ENCODE measurements at regions of chr17 and their contacts with region 1.

Region 1: DNA sequence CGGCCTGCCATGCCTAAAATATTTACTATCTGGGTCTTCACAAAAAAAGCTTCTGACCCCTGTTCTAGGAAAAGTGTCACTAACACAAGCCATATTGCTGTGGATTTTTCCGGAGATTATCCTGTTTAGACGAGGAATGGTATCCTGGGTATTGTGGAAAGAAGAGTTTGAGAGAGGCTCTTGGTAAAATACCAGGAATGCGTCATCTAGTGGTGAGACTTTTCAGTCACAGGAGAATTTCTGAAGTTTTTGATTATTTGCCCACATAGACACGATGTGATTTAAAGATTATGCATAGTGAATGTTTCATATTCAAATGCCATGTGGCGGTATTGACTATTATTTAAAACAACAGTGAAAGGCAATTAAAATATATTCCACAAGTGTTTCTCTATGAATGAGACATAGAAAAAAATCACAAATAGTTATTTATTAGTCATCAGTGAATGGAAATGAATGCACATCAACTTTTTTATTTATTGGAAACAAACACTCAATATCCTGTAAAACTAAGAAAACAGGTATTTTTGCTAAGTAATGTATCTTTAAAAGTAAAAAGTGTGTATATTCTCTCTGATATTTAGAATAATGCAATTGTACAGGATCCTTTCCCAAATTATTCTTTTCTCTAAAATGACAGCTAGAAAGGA is 7.8 kb downstream of the KRT28 start:
- DNase-seq: no peak
- H3K4me3 ChIP-seq: no peak overlapping the region
- H3K27ac ChIP-seq: no peak overlapping the region
- H3K4me1 ChIP-seq: peaks cover 0 to 7% (median 0%) of the 10 kb centered on the region in 6 donors
- H3K27me3 ChIP-seq: peaks cover 0 to 28% (median 5%) of the 10 kb centered on the region in 7 donors
- CTCF ChIP-seq: peak in 7 of 11 experiments; percentile 13 to 50 (median 29)
- POLR2A ChIP-seq: no peak

Region 2: DNA sequence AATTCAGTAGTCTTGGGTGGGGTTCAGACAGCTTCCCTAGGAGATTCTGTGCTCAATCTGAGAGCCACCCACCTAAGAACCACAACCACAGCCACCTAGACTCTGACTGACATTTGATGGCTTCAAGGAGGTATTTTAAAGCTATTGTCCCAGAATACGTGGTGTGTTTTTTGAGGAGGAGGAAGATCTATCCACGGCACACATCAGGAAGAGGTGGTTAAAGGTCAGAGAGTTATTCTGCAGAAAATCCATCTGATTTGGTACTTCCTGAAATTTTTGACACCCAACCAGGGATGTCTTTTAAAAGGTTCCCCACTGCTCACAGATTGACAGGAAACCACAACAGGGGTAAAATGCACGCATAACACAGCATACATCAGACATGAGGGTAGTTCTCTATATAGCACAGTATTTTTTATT is 169.4 kb before region 1 on chr17:
- intact Hi-C with region 1: loop called (anchors 5 kb)
- DNase-seq: no peak
- H3K4me3 ChIP-seq: no peak overlapping the region
- H3K27ac ChIP-seq: peak overlapping the region in 3 of 8 donors; percentile 0 to 59 (median 51)
- H3K4me1 ChIP-seq: peaks cover 23 to 69% (median 31%) of the 10 kb centered on the region in 6 donors
- H3K27me3 ChIP-seq: no peaks in the 10 kb centered on the region
- CTCF ChIP-seq: no peak
- POLR2A ChIP-seq: no peak

Region 3: GRCh38 chr17:40647624-40648383 is 144.1 kb before region 1 on chr17 and contains the start of gene SMARCE1:
- intact Hi-C with region 1: no loop called
- DNase-seq: peak; percentile 93
- H3K4me3 ChIP-seq: peak within 1 kb of the TSS; percentile 71 to 96 (median 88)
- H3K27ac ChIP-seq: peak within 1 kb of the TSS; percentile 97 to 99 (median 98)
- H3K4me1 ChIP-seq: peaks cover 26 to 63% (median 50%) of the 10 kb centered on the region in 6 donors
- H3K27me3 ChIP-seq: no peaks in the 10 kb centered on the region
- CTCF ChIP-seq: no peak
- POLR2A ChIP-seq: peak in 1 of 3 donors; percentile 23
- total RNA-seq, gene SMARCE1: 76.3 to 126 (median 102) TPM

Region 4: DNA sequence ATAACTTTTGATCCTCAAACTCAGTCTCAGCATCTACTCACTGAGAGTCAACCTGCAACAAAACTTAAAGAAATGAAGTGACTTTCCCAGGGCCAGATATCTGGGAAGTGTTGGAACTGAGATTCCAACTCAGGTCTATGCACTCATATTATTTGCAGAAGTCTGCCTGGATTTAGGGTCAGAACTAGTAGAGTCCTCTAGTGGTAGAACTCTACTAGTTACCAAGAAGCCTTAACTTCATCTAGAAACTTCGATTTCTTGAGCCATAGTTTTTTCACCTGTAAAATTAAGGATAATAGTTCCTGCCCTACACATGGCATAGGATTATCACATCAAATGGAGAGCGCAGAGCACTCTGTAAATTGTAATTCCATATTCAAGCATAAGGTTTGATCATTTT is 65.0 kb before region 1 on chr17:
- intact Hi-C with region 1: no loop called
- DNase-seq: no peak
- H3K4me3 ChIP-seq: no peak overlapping the region
- H3K27ac ChIP-seq: no peak overlapping the region
- H3K4me1 ChIP-seq: peaks cover 0 to 9% (median 0%) of the 10 kb centered on the region in 6 donors
- H3K27me3 ChIP-seq: peaks cover 0 to 9% (median 0%) of the 10 kb centered on the region in 7 donors
- CTCF ChIP-seq: peak in 6 of 11 experiments; percentile 13 to 43 (median 27)
- POLR2A ChIP-seq: no peak

Region 5: GRCh38 chr17:41163828-41164227 is 371.9 kb after region 1 on chr17:
- intact Hi-C with region 1: no loop called
- DNase-seq: no peak
- H3K4me3 ChIP-seq: no peak overlapping the region
- H3K27ac ChIP-seq: no peak overlapping the region
- H3K4me1 ChIP-seq: no peaks in the 10 kb centered on the region
- H3K27me3 ChIP-seq: peaks cover 0 to 7% (median 0%) of the 10 kb centered on the region in 7 donors
- CTCF ChIP-seq: no peak
- POLR2A ChIP-seq: no peak